RWPE1 (cell line): ENCODE measurements at regions of chr2 and their contacts with region 1.

Region 1: DNA sequence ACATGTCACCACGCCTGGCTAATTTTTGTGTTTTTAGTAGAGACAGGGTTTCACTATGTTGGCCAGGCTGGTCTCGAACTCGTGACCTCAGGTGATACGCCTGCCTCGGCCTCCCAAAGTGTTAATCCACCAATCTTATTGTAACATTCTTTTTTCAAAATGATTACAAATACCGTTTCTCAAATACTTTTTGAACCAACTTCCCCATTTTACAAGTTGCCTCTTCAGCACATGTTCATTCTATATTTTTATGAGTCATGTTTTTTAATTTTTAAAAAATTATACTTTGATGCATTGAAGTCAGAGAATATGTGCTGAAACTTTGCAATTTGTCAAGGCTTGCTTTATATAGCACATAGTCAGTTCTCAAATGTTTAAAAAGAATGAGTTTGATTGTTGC is 58.2 kb downstream of the QPCT start:
- DNase-seq: no peak
- H3K27ac ChIP-seq: no peak overlapping the region
- CTCF ChIP-seq: no peak

Region 2: DNA sequence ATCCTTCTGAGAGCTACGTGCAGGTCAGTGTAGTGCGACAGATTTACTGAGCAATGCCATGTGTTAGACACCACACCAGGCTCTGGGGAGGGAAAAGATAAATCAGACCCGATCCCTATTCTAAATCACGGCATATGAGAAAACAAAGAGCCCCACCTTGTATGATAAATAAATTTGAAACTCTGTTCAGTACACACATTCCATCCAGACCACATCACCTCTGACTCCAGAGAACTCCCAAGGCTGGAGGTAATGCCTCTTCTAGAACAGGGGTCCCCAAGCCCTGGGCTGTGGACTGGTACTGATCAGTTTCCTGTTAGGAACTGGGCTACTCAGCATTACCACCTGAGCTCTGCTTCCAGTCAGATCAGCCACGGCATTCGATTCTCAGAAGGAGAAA is 19.1 kb after region 1 on chr2:
- CTCF ChIA-PET with region 1: no interaction called
- POLR2A ChIA-PET with region 1: no interaction called
- DNase-seq: no peak
- H3K27ac ChIP-seq: no peak overlapping the region
- CTCF ChIP-seq: no peak

Region 3: DNA sequence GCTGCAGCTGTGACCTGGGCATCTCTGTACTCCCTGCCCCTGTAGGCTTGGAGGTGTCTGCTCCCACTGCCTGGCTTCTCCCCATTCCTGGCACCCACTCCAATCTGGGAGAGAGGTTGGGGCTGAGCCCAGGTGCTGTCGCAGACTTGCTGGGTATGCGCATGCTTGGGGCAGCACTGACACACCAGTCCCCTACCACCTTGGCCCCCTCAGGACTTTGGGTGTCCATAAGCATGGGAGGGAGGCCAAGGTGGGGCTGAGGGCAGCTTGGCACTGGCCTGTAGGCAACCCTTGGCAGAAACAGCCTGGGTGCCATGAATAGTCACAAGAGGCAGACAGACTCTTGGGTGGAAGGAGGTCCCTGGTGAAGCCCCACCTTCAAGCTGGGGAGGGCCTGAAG is 78.6 kb after region 1 on chr2:
- CTCF ChIA-PET with region 1: no interaction called
- POLR2A ChIA-PET with region 1: no interaction called
- DNase-seq: no peak
- H3K27ac ChIP-seq: no peak overlapping the region
- CTCF ChIP-seq: no peak

Region 4: DNA sequence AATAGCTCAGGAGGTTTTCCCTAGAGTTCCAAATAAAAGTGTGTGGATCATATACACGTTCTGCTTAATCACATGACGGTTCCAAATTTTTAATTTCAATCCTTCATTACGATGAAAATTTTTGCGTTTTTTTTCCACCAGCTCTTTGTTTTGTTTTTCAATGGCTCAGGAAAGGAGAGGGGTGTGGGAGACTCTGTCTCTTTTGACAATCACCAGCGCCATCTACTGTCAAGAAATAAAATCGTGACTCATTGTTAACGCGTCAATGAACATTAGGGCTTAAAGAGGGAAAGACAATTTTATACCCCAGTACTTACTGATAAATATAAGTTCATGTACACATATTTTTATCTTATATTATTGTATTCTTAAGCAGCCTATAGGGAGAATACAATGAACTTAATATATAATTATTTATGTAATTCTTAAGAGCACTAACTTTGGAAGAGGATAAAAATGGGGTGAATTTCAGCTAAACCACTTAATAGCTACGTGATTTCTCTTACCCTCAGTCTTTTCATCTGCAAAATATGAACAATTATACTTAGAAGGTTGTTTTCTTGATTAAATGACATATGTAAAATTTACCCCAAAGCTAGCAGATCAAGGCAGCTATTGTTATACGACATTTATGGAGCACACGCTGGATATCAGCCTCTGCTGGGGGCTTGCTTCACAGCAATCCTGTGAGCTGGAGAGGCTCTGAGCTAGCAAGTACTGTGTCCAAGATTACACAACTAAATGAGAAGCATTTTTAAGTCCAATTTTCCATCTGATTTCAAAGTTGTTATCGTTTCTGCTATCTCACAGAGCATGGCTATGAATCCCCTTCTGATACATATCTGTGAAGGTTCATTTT is 475.1 kb after region 1 on chr2:
- CTCF ChIA-PET with region 1: interaction called, 60 read pairs
- POLR2A ChIA-PET with region 1: no interaction called
- DNase-seq: peak; percentile 67
- H3K27ac ChIP-seq: no peak overlapping the region
- CTCF ChIP-seq: peak; percentile 74